HEK293 (cell line): ENCODE measurements at regions of chr11 and their contacts with region 1.

Region 1: GRCh38 chr11:69131644-69132300 is 24.0 kb upstream of the SMIM38 start:
- H3K4me3 ChIP-seq: no peak overlapping the region
- H3K27ac ChIP-seq: no peak overlapping the region
- H3K4me1 ChIP-seq: no peaks in the 10 kb centered on the region
- CTCF ChIP-seq: 0 out of 2 replicates have a peak, but pooled peaks have one; percentile 21

Region 2: GRCh38 chr11:69145062-69145405 is 13.3 kb after region 1 on chr11:
- CTCF ChIA-PET with region 1: interaction called, 13 read pairs
- POLR2A ChIA-PET with region 1: no interaction called
- H3K4me3 ChIP-seq: no peak overlapping the region
- H3K27ac ChIP-seq: no peak overlapping the region
- H3K4me1 ChIP-seq: no peaks in the 10 kb centered on the region
- CTCF ChIP-seq: no peak

Region 3: GRCh38 chr11:69335007-69335780 is 203.4 kb after region 1 on chr11:
- CTCF ChIA-PET with region 1: interaction called, 12 read pairs
- POLR2A ChIA-PET with region 1: no interaction called
- H3K4me3 ChIP-seq: no peak overlapping the region
- H3K27ac ChIP-seq: no peak overlapping the region
- H3K4me1 ChIP-seq: no peaks in the 10 kb centered on the region
- CTCF ChIP-seq: no peak